Dendritic cell treated with granulocyte-macrophage colony-stimulating factor and Interleukin-4, amounts not matched to agents 40 ng/mL and 50 ng/mL, for 4 days (primary cell): ENCODE measurements at regions of chr1 and their contacts with region 1.

Region 1: GRCh38 chr1:39992234-39992633 is 37.3 kb downstream of the MFSD2A start:
- H3K4me3 Mint-ChIP-seq: no peak overlapping the region
- H3K27ac Mint-ChIP-seq: peak overlapping the region; percentile 64
- H3K4me1 Mint-ChIP-seq: peaks cover 36% of the 10 kb centered on the region
- H3K27me3 Mint-ChIP-seq: no peaks in the 10 kb centered on the region

Region 2: GRCh38 chr1:40029608-40030007 is 37.4 kb after region 1 on chr1:
- intact Hi-C with region 1: loop called (anchors 5 kb)
- H3K4me3 Mint-ChIP-seq: no peak overlapping the region
- H3K27ac Mint-ChIP-seq: peak overlapping the region; percentile 5
- H3K4me1 Mint-ChIP-seq: peaks cover 40% of the 10 kb centered on the region
- H3K27me3 Mint-ChIP-seq: peaks cover 1% of the 10 kb centered on the region